ENCODE measurements at regions of chr12 and their contacts with region 1.

Region 1: GRCh38 chr12:113048716-113049127 is 7.8 kb upstream of the DTX1 start:
- DNase-seq: peak; percentile 71
- H3K4me3 ChIP-seq: no peak overlapping the region
- H3K27ac ChIP-seq: no peak overlapping the region
- H3K4me1 ChIP-seq: no peaks in the 10 kb centered on the region
- H3K27me3 ChIP-seq: peaks cover 3% of the 10 kb centered on the region
- CTCF ChIP-seq: peak; percentile 68

Region 2: GRCh38 chr12:112759789-112760188 is 288.9 kb before region 1 on chr12:
- intact Hi-C with region 1: no loop called
- DNase-seq: no peak
- H3K4me3 ChIP-seq: no peak overlapping the region
- H3K27ac ChIP-seq: no peak overlapping the region
- H3K4me1 ChIP-seq: no peaks in the 10 kb centered on the region
- H3K27me3 ChIP-seq: no peaks in the 10 kb centered on the region
- CTCF ChIP-seq: no peak

Region 3: DNA sequence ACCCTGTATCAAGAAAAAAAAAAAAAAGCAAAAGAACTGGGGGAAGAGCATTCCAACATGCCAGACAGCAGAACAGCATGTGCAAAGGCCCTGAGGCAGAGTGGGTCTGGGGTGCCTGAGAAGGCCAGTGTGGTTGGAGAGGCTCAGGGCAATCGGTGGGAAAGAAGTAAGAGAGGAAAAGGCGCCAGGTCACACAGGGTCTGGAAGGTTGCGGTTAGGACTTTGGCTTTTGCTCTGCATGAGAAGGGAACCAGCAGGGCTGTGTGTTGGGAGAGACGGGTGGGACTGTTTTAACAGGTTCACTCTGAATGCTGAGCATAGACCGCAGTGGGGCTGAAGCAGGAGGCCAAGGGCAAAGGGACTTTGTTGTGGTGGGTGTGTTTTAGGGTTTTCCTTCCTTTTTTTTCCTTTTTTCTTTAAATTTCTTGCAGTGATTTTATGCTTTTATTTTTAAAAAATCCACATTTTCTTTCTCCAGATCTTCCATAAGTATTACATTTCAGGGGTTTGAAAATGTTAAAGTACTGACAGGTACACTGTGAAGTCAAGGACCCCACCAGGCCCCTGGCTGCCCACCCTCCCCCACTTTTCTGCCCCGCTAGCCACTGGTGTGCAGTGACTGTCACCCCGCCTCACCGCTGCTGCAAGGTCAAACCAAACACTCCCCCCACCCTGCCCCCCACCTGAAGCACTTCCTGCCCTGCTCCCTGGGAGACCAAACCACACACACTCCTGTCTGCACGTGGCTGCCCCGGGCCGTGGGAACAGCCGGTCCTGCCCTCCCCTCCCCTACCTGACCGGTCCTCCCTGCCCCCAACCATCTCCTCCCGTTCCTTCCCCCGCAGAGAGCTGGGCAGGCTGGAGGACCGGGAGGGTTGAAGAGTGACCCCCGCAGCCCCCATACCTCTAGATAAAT is 37.8 kb after region 1 on chr12:
- intact Hi-C with region 1: no loop called
- DNase-seq: no peak
- H3K4me3 ChIP-seq: no peak overlapping the region
- H3K27ac ChIP-seq: no peak overlapping the region
- H3K4me1 ChIP-seq: no peaks in the 10 kb centered on the region
- H3K27me3 ChIP-seq: no peaks in the 10 kb centered on the region
- CTCF ChIP-seq: no peak

Region 4: GRCh38 chr12:113098446-113098896 is 49.7 kb after region 1 on chr12:
- intact Hi-C with region 1: loop called (anchors 5 kb)
- DNase-seq: peak; percentile 91
- H3K4me3 ChIP-seq: no peak overlapping the region
- H3K27ac ChIP-seq: no peak overlapping the region
- H3K4me1 ChIP-seq: no peaks in the 10 kb centered on the region
- H3K27me3 ChIP-seq: no peaks in the 10 kb centered on the region
- CTCF ChIP-seq: peak; percentile 75

Region 5: DNA sequence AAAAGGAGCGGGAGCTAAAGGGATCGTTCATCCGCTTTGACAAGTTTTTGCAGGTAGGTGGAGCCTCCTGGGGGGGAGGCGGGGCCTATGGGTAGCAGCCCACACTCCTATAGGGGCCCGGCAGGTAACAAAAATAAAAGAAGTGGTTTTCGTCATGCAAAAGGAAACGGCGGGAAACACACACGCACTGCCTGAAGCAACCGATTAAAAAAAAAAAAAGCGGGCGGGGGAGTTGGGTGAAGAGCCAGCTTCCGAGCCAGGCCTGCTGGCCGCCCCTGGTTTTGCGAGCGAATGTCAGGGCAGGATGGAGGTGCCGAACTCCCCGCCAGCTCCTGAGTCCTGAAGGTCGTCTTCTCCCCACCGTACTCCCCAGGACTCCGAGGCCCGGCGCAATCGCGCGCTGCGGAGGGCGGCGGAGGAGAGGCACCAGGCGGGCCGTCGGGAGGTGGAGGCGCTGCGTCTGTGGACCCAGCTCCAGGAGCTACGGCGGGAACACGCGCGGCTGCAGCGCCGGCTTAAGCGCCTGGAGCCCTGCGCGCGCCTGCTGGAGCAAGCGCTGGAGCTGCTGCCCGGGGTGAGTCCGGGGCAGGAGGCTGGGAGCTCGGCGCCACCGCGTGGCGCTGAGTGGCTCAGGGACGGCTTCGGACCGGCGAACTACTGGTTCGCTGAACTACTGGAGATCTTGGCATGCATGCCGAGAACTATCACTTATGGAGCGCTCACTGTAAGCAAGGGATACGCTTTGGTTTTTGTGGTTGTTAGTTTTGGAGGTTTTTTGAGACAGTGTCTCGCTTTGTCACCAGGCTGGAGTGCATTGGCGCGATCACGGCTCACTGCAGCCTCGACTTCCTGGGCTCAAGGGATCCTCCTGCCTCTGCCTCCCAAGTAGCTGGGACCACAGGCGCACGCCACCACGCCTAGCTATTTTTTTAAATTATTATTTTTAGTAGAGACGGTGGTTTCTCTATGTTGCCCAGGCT is 104.4 kb after region 1 on chr12:
- intact Hi-C with region 1: loop called (anchors 5 kb)
- DNase-seq: peak; percentile 70
- H3K4me3 ChIP-seq: peak overlapping the region; percentile 42
- H3K27ac ChIP-seq: no peak overlapping the region
- H3K4me1 ChIP-seq: peaks cover 9% of the 10 kb centered on the region
- H3K27me3 ChIP-seq: peaks cover 14% of the 10 kb centered on the region
- CTCF ChIP-seq: peak; percentile 35

Region 6: DNA sequence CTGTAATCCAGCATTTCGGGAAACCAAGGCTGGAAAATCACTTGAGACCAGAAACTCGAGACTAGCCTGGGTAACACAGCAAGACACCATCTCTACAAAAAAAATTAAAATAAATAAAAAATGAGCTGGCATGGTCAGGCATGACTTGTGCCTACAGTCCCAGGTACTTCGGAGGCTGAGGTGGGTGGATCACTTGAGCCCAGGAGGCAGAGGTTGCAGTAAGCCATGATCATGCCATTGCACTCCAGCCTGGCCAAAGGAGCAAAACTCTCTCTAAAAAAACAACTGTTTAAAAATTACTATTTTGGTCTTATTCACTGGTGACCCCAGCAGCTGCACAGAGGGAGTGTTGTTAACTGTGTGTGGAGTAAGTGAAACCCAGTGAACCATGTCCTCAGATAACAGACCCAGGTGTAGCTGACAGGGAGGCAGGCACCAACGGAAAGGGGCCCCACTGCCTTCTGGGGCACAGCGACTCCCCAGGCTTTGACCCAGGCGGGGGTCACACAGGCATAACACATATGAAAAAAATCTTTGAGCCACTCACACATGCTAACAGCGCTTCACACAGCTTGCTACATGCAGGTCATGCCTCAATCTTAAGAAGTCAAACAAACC is 124.5 kb after region 1 on chr12:
- intact Hi-C with region 1: loop called (anchors 2 kb)
- DNase-seq: no peak
- H3K4me3 ChIP-seq: no peak overlapping the region
- H3K27ac ChIP-seq: no peak overlapping the region
- H3K4me1 ChIP-seq: no peaks in the 10 kb centered on the region
- H3K27me3 ChIP-seq: no peaks in the 10 kb centered on the region
- CTCF ChIP-seq: no peak

Measured in colonic mucosa (tissue), 4 donors.